Left cardiac atrium (tissue), 4 donors: ENCODE measurements at regions of chr12 and their contacts with region 1.

Region 1: DNA sequence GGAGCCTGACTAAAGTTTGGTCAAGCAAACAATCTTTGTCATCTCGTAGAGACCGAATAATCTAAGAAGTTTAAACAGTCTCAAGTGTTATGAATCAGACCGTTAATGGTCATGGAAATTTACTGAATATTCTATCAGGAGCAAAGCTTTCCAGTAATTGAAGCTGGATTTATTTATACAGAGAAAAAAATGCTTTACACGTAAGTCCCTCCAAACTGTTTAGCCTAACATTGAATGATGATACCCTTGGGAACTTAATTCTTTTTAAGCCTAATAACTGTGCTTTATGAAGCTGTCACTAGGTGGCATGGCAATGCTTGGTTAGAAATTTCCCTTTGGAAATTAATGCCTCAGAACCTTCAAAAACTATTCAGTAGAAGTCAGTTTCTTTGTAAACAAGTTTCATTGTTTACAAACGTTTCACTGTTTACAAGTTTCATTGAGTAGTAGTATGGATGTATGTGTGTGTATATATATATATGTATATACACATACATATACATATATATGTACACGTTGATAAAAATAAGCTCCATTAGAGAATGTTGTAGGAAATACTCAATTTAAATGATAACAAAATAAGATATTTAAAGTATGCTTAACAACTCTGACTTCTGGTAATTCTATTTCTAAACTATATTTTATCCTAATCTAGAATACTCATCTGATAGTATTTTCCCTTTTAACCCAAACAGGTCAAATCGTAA is 32.1 kb downstream of the DEPDC4 start:
- DNase-seq: no peak
- ATAC-seq: peak; percentile 59 to 73

Region 2: GRCh38 chr12:100450735-100451134 is 216.0 kb after region 1 on chr12:
- intact Hi-C with region 1: no loop called
- DNase-seq: no peak
- ATAC-seq: no peak

Region 3: GRCh38 chr12:100528471-100529127 is 293.8 kb after region 1 on chr12:
- intact Hi-C with region 1: no loop called
- DNase-seq: no peak
- ATAC-seq: no peak

Region 4: DNA sequence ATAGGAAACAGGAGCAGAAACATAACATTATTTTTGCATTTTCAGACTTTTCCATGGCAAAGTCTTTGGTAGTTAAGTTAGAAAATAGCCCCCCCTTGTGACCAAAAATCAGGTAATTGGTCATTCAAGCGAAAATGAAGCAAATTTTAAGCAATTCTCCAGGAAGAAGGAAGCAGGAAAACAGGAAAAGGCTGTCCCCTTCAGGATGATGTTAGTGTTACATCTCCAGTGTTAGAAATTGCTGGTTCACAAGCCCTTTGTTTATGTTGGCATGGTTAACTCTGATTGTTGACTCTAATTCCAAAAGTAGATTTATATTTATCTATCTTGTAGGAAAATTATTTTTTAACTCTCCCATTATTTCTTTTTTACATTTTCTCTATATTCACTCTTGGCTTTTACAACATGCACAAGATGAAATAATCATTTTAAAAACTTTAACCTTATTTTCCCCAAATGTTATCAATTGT is 319.9 kb after region 1 on chr12:
- intact Hi-C with region 1: loop called (anchors 2 to 10 kb)
- DNase-seq: no peak
- ATAC-seq: peak; percentile 77 to 80

Region 5: DNA sequence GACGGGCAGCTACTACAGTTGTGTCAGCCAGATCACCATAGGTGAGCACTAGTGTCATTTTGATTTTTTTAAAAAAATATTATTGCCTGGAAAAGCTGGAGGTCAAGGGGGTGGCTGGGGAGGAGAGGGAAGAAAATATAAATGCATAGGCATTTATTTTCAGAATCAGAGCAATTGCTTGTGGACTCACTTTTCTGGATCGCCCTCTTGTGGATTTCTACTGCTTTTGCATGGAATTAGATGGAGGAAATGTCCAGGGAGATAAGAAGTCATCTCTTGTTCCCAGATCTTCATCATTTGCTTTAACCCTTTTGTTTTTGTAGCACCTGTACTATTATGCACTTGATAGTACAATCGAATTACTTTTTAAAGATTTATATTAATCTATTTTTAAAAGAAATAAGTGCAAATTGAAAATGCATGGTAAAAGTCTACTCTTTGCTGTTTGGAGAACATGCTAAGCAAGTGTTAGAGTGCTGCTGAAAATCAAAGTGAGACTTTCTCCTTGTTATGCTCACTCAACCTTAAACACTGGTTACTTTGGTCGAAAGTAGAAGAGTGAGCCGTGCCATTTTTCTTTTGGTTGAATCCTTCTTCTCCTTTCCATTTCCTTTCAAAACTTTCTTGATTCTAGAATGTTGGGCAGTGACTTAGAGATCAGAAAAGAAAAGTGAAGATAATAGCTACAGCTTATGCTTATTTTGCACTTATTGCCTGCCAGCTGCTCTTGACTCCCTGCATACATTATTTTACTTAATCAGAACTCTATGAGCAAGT is 499.3 kb after region 1 on chr12:
- intact Hi-C with region 1: loop called (anchors 5 to 10 kb)
- DNase-seq: no peak
- ATAC-seq: no peak